ENCODE measurements at regions of chr1 and their contacts with region 1.

Region 1: DNA sequence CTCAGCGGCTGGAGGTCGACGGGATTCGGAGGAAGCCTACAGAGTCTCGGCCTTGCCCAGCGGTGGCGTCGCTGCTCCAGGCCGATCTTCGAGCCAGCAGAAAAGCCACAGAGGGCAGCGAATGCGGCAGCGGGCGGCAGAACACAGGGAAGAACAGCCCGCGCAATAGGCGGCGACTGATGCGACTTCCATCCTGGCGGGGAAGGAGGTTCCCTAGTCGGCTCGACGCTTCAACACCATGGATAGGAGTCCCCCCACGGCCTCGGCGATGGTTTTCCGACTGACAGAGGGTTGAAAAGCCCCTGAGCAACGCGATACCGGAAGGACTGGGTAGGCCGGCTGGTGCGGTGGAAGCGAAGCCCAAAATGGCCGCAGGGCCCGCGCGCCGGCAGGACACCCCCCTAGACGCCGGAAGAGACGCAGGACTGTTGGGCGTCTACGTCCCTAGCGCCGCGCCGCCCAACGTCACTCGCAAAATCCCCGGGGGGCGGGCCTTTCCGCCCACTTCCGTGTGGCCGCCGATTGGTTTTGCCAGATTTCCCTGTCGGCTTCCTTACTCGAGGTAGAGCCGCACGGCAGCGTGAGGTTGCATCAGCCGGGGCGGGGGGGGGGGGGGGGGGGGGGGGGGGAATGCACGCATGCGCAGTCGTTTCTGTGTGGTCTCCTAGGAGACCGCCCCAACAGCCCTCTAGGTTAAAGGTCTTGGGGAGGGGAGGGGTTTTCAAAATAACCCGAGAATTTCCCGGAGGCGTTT is at the start of gene PPP1R15B:
- DNase-seq: peak; percentile 100
- ATAC-seq: peak; percentile 82
- H3K4me3 ChIP-seq: peak within 1 kb of the TSS; percentile 80
- H3K27ac ChIP-seq: peak within 1 kb of the TSS; percentile 86
- H3K4me1 ChIP-seq: peaks cover 23% of the 10 kb centered on the region
- H3K27me3 ChIP-seq: no peaks in the 10 kb centered on the region
- CTCF ChIP-seq: no peak
- total RNA-seq, gene PPP1R15B: 50.7 and 57.5 TPM in 2 replicates

Region 2: GRCh38 chr1:204319491-204319907 is 92.1 kb before region 1 on chr1:
- CTCF ChIA-PET with region 1: no interaction called
- POLR2A ChIA-PET with region 1: no interaction called
- intact Hi-C with region 1: loop called (anchors 5 kb)
- DNase-seq: peak; percentile 99
- ATAC-seq: peak; percentile 90
- H3K4me3 ChIP-seq: peak overlapping the region; percentile 28
- H3K27ac ChIP-seq: peak overlapping the region; percentile 90
- H3K4me1 ChIP-seq: peaks cover 49% of the 10 kb centered on the region
- H3K27me3 ChIP-seq: no peaks in the 10 kb centered on the region
- CTCF ChIP-seq: no peak

Region 3: DNA sequence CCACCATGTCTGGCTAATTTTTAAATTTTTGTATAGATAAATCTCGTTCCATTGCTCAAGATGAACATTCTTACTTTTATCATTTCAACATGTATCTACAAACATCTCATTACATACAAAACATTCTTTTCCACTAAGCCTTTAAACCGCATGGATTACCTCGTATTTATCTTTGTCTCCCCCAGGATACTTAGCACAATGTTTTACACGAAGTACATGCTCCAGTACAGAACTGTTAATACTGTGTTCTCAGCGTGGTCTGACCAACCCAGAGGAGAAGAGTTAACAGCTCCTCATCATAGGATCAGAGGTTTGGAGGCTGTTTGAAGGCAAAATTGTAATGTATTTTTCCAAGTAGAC is 75.6 kb after region 1 on chr1:
- CTCF ChIA-PET with region 1: no interaction called
- POLR2A ChIA-PET with region 1: no interaction called
- intact Hi-C with region 1: no loop called
- DNase-seq: no peak
- ATAC-seq: no peak
- H3K4me3 ChIP-seq: no peak overlapping the region
- H3K27ac ChIP-seq: no peak overlapping the region
- H3K4me1 ChIP-seq: peaks cover 8% of the 10 kb centered on the region
- H3K27me3 ChIP-seq: no peaks in the 10 kb centered on the region
- CTCF ChIP-seq: no peak

Measured in PC-3 (cell line).